Breast epithelium (tissue), 4 donors: ENCODE measurements at regions of chr9 and their contacts with region 1.

Region 1: GRCh38 chr9:119094086-119094485 is 275.1 kb downstream of the BRINP1 start:
- DNase-seq: no peak
- H3K4me3 ChIP-seq: no peak overlapping the region
- H3K27ac ChIP-seq: no peak overlapping the region
- H3K4me1 ChIP-seq: no peaks in the 10 kb centered on the region
- H3K27me3 ChIP-seq: no peaks in the 10 kb centered on the region
- CTCF ChIP-seq: no peak
- POLR2A ChIP-seq: no peak

Region 2: GRCh38 chr9:119802621-119803020 is 708.5 kb after region 1 on chr9:
- intact Hi-C with region 1: loop called (anchors 5 kb)
- DNase-seq: no peak
- H3K4me3 ChIP-seq: no peak overlapping the region
- H3K27ac ChIP-seq: no peak overlapping the region
- H3K4me1 ChIP-seq: no peaks in the 10 kb centered on the region
- H3K27me3 ChIP-seq: no peaks in the 10 kb centered on the region
- CTCF ChIP-seq: no peak
- POLR2A ChIP-seq: no peak